ENCODE measurements at regions of chr12 and their contacts with region 1.

Region 1: GRCh38 chr12:11039171-11039570 is 8.0 kb upstream of the TAS2R31 start:
- DNase-seq: no peak
- H3K4me3 ChIP-seq: no peak overlapping the region
- H3K27ac ChIP-seq: no peak overlapping the region
- H3K4me1 ChIP-seq: no peaks in the 10 kb centered on the region
- H3K27me3 ChIP-seq: no peaks in the 10 kb centered on the region
- CTCF ChIP-seq: no peak
- POLR2A ChIP-seq: no peak

Region 2: DNA sequence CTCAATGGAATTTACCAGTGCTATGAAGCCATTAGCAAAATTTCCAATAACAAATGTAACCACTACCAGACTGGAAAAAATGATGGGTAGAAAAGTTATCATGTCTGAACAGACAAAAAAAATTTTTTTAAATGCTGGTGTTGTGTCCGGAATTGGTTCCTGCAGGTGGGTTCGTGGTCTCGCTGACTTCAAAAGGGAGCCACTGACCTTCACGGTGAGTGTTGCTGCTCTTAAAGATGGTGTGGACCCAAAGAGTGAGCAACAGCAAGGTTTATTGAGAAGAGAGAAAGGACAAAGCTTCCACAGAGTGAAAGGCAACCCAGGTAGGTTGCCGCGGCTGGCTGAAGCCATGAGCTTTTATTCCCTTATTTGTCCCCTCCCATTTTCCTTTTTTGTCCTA is 53.0 kb after region 1 on chr12 and contains the start of gene TAS2R43:
- intact Hi-C with region 1: loop called (anchors 10 kb)
- DNase-seq: no peak
- H3K4me3 ChIP-seq: no peak within 1 kb of the TSS
- H3K27ac ChIP-seq: no peak within 1 kb of the TSS
- H3K4me1 ChIP-seq: no peaks in the 10 kb centered on the region
- H3K27me3 ChIP-seq: no peaks in the 10 kb centered on the region
- CTCF ChIP-seq: no peak
- POLR2A ChIP-seq: no peak
- total RNA-seq, gene TAS2R43: 0.29 to 19.5 (median 7.7) TPM in 3 of 4 donors, not detected in the other